ENCODE measurements at regions of chr3 and their contacts with region 1.

Region 1: DNA sequence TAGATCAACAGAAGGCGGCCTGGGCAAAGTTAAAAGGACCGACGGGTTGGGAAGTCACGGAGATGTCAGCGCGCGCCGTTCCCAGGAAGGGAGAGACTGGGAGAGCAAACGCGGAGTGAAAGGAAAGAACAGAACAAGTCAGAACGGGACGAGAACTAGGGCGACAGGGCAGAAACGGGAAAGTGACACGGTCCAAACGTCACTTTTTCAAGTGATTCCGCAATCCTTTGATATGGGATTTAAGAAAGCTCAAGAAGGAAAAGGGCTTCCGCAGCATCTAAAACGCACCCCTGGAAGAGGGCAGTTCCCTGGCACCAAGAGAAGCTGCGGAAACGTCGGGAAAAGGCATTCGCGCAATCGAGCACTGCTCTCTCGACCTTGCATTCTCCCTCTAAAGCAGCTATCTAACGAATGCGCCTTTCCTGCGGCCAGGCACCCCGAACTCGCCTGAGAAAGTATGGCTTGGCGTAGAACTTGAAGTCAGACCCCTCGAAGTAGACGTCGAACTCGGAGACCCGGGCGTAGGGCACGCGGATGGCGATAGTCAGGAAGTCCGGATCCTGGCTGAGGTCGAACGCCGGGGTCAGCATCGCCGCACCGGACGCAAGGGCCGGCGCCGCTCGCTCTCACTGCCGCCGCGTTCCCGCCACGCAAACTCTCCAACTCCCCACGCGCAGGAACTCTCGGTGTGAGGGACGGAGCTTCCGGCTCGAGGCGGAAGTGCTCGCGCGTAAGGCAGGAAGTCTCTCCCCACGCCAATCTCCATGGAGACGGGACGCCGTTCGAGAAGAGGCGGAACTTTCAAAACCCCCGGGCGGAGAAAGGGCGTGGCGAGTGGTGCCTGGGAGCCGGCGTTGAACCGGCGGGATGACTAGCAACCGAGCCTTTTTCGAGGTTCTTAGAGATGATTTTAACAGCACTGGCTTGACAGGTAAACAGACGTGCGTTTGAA is at the start of gene SHQ1:
- DNase-seq: peak; percentile 44
- H3K4me3 ChIP-seq: peak within 1 kb of the TSS; percentile 94
- CTCF ChIP-seq: no peak

Region 2: DNA sequence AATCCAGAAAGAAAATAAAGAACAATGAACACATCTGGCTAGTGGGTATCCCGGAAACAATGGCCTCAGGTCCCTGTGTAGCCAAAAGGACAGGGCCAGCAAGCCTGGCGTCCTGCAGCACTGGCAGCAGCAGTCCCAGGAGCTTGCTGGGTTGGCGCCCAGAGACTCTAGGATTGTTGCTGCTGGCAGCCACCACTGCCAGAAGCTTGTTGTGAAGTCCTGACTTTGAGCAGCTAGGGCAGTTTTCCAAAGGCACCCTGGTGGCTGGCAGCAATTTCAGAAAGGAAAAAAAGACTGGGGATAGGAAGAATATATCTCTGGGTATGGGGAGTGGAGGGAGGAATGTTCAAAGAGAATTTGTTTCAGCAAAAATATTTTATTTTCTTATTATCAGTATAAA is 11.1 kb before region 1 on chr3:
- CTCF ChIA-PET with region 1: interaction called, 10 read pairs
- POLR2A ChIA-PET with region 1: no interaction called
- DNase-seq: no peak
- H3K4me3 ChIP-seq: no peak overlapping the region
- CTCF ChIP-seq: no peak

Region 3: DNA sequence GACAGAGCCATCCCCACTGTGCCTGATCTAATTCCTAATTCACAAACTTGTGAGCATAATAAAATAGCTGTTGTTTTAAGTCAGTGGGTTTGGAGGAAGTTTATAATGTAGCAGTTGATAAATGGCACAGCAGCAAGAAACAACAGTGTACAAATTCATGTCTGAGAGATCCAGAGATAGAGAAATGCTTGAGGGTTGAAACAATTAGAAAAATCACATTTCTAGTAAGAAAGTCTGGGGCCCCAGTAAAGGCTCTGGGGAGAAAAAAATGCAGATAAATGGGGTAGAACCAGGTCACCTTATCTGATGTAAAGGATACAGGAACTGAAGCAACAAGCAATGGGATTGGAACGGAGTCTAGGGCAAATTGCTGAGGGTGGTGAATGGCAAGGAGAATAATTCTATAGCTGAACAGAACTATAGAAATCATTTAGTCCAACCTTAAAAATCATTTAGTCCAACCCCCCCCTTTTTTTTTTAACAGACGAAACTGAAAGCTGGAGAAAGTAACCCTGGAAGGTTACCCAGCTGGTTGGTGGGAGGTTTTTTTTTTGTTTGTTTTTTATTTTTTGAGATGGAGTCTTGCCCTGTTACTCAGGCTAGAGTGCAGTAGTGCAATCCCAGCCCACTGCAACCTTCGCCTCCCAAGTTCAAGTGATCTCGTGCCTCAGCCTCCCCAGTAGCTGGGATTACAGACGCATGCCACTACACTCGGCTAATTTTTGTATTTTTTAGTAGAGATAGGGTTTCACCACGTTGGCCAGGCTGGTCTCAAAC is 14.5 kb after region 1 on chr3:
- CTCF ChIA-PET with region 1: interaction called, 51 read pairs
- POLR2A ChIA-PET with region 1: no interaction called
- DNase-seq: no peak
- H3K4me3 ChIP-seq: no peak overlapping the region
- CTCF ChIP-seq: no peak

Region 4: DNA sequence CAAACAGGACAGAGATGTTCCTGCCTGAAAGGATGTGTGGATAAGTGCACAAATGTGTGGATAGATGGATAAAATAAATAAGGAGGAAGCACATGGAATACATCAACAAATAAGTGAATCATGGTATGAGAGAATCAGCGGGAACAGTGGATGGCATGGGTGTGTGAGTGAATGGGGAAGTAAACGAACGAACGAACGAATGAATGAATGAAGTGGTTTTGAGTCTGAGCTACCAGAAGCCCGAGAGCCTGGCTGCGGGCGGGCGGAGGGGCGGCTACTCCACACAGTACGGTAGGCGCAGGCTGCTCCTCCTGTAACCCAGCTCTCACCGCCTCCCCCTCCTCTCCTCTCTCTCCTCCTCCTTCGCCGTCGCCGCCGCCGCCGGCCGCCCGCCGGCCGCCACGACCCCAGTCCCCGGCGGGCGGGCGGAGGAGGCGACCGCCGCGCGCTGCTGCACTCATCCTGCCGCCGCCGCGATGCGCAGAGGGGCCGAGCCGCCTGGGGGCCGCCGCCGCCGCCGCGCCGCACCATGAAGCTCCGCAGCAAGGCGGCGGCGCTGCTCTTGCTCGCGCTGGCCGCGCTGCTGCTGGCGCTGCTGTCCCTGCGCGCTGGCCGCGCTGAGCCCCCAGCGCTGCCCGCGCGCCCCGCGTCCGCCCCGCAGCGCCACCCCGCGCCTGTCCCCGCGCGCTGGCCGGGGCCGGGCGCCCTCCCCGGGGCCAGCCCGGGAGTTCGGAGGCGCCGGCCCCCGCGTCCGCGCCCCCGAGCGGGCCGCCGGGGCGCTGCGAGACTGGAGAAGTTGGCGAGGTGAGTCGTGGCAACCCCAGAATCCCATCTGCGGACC is 39.9 kb after region 1 on chr3 and contains the start of gene GXYLT2:
- CTCF ChIA-PET with region 1: interaction called, 21 read pairs
- POLR2A ChIA-PET with region 1: no interaction called
- DNase-seq: no peak
- H3K4me3 ChIP-seq: peak within 1 kb of the TSS; percentile 67
- CTCF ChIP-seq: no peak

Region 5: GRCh38 chr3:72896996-72897757 is 49.1 kb after region 1 on chr3:
- CTCF ChIA-PET with region 1: interaction called, 10 read pairs
- POLR2A ChIA-PET with region 1: no interaction called
- DNase-seq: no peak
- H3K4me3 ChIP-seq: no peak overlapping the region
- CTCF ChIP-seq: no peak

Region 6: GRCh38 chr3:72969766-72970165 is 121.7 kb after region 1 on chr3:
- CTCF ChIA-PET with region 1: no interaction called
- POLR2A ChIA-PET with region 1: no interaction called
- DNase-seq: no peak
- H3K4me3 ChIP-seq: no peak overlapping the region
- CTCF ChIP-seq: no peak

Region 7: GRCh38 chr3:73056014-73056844 is 208.2 kb after region 1 on chr3:
- CTCF ChIA-PET with region 1: interaction called, 67 read pairs
- POLR2A ChIA-PET with region 1: no interaction called
- DNase-seq: no peak
- H3K4me3 ChIP-seq: no peak overlapping the region
- CTCF ChIP-seq: peak; percentile 39

Region 8: GRCh38 chr3:73484656-73485248 is 636.7 kb after region 1 on chr3:
- CTCF ChIA-PET with region 1: no interaction called
- POLR2A ChIA-PET with region 1: no interaction called
- DNase-seq: no peak
- H3K4me3 ChIP-seq: no peak overlapping the region
- CTCF ChIP-seq: no peak

Measured in AG04449 (cell line).